ENCODE measurements at regions of chr9 and their contacts with region 1.

Region 1: GRCh38 chr9:128455849-128456612 is at the start of gene ODF2:
- DNase-seq: peak; percentile 99
- ATAC-seq: peak; percentile 95
- H3K4me3 Mint-ChIP-seq: peak within 1 kb of the TSS; percentile 81
- H3K27ac Mint-ChIP-seq: peak within 1 kb of the TSS; percentile 82
- H3K4me1 Mint-ChIP-seq: peaks cover 16% of the 10 kb centered on the region
- H3K27me3 Mint-ChIP-seq: no peaks in the 10 kb centered on the region
- total RNA-seq, gene ODF2: 73.5 to 86.4 TPM

Region 2: DNA sequence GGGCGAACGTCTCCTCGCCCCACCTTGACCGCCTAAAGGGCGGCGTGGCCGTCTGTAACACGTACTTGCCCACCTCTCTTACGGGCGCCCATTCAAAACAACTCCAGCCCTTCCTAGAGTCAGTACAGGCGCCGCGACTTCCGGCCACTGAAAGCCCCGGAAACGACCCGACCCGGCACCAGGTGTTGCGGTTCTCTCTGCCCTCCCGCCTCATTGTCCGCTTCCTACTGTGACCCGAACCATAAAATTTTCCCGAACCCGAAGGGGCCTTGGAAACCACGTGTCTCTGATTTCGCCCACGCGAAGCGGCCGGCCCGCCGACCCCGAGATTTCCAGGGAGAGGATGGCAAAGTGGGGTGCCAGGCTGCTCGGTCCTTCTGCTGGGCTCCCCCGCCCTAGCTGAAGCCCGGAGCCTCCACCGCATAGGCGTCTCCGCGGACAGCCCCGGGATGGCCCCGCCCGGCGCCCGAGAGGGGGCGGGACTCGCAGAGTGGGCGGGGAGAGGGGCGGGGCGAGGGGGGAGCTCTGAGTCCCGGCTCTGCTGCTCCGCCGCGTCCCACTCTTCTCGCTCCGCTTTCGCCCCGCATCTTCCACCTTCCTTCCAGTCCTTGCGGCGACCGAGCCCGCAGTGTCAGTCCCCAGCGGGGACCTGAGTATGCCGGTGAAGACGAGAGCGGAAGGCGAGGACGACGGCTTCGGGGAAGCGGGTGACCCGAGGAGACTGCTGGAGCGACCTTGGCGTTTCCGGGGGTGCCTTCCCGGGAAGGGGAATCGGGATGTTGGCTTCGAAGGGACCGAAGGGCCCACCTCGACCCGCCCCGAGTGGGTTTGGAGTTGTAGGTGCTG is 327.8 kb before region 1 on chr9:
- CTCF ChIA-PET with region 1: no interaction called
- POLR2A ChIA-PET with region 1: no interaction called
- intact Hi-C with region 1: loop called in 1 of 2 experiments (anchors 1 kb)
- DNase-seq: peak; percentile 90
- ATAC-seq: peak; percentile 84
- H3K4me3 Mint-ChIP-seq: peak overlapping the region; percentile 96
- H3K27ac Mint-ChIP-seq: peak overlapping the region; percentile 96
- H3K4me1 Mint-ChIP-seq: peaks cover 29% of the 10 kb centered on the region
- H3K27me3 Mint-ChIP-seq: peaks cover 2% of the 10 kb centered on the region

Region 3: DNA sequence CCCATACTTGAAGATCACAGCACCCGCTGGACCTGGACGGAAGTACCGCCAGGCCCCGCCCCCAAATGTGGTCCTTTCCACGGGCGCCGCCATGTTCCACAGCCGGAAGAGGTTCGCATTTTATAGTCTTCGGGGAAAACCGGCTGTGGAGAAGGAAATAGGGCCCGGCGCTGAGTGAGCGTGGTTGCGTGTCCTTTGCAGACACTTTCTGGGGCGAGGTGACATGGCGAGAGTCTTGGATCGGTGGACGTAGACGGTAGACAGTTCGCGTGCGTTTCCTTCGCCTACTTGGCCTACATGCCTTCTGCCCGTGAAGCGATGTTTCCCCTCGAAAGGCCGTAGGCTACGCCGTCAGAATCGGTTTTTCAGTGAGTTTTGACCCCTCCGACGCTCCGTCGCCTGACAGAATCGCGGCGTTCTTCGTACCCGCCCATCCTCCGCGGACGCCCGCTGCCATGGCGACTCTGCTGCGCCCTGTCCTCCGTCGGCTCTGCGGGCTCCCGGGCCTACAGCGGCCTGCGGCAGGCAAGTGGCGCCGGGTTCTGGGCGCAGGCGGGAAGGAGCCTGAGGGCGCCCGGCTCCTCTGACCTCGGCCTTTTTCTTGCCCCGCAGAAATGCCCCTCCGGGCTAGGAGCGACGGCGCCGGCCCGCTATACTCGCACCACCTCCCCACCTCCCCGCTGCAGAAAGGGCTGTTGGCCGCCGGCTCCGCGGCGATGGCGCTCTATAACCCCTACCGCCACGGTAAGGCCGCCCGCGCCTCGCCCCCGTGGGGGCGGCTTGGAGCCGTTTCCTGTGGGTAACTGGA is 133.4 kb before region 1 on chr9 and contains the starts of genes COQ4 and TRUB2:
- CTCF ChIA-PET with region 1: no interaction called
- POLR2A ChIA-PET with region 1: no interaction called
- intact Hi-C with region 1: loop called in 1 of 2 experiments (anchors 1 kb)
- DNase-seq: peak; percentile 96
- ATAC-seq: peak; percentile 90
- H3K4me3 Mint-ChIP-seq: peak within 1 kb of the TSS; percentile 87
- H3K27ac Mint-ChIP-seq: peak within 1 kb of the TSS; percentile 93
- H3K4me1 Mint-ChIP-seq: peaks cover 19% of the 10 kb centered on the region
- H3K27me3 Mint-ChIP-seq: no peaks in the 10 kb centered on the region
- total RNA-seq, gene COQ4: 32.1 to 38.8 TPM
- total RNA-seq, gene TRUB2: 29.5 to 37.5 TPM

Region 4: DNA sequence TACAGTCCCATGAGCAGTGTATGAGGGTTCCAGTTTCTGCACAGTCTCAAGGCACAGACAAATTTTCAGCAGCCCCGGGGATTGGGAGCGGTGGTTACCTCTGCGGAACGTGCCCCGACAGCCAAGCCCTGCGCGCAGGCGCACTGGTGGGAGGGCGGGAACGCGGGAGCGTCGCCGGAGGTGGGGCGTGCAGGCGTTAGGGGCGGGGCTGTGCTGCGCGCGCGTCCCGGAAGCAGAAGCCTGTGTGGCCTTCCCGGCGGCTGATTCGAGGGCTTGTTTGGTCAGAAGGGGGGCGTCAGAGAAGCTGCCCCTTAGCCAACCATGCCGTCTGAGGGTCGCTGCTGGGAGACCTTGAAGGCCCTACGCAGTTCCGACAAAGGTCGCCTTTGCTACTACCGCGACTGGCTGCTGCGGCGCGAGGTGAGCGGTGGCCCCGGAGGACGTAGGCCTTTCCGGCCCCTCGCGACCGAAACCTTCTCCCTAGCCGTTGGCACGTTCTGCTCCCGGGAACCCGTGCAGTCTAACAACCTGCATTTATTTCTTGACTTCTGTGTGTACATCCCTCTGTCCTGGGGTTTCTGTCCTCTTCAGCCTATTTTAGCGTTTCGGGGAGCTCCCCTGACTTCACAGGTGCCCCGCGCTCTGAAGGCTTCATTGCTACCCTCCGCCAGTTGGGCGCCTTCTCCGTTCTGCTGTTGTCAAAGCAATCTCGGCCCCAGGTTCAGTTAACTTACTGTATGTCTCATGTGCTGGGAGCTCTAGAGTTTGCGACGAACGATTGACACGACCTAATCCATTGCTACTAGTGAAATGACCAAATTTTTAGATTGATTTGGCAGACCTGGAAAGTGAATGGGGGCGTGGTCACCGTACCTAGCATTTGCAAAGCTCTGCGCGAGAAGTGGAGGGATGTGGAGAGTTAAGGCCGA is 48.7 kb after region 1 on chr9 and contains the start of gene GLE1:
- CTCF ChIA-PET with region 1: interaction called, 3 read pairs
- POLR2A ChIA-PET with region 1: no interaction called
- intact Hi-C with region 1: loop called (anchors 1 to 5 kb)
- DNase-seq: peak; percentile 98
- ATAC-seq: peak; percentile 99
- H3K4me3 Mint-ChIP-seq: peak within 1 kb of the TSS; percentile 95
- H3K27ac Mint-ChIP-seq: peak within 1 kb of the TSS; percentile 99
- H3K4me1 Mint-ChIP-seq: peaks cover 21% of the 10 kb centered on the region
- H3K27me3 Mint-ChIP-seq: no peaks in the 10 kb centered on the region
- total RNA-seq, gene GLE1: 52.5 to 54.4 TPM

Region 5: GRCh38 chr9:128771745-128772519 is 315.9 kb after region 1 on chr9 and contains the start of gene ZER1:
- CTCF ChIA-PET with region 1: no interaction called
- POLR2A ChIA-PET with region 1: no interaction called
- intact Hi-C with region 1: loop called in 1 of 2 experiments (anchors 1 kb)
- DNase-seq: peak; percentile 97
- ATAC-seq: peak; percentile 94
- H3K4me3 Mint-ChIP-seq: peak within 1 kb of the TSS; percentile 82
- H3K27ac Mint-ChIP-seq: peak within 1 kb of the TSS; percentile 86
- H3K4me1 Mint-ChIP-seq: peaks cover 18% of the 10 kb centered on the region
- H3K27me3 Mint-ChIP-seq: no peaks in the 10 kb centered on the region
- total RNA-seq, gene ZER1: 17.1 to 19.3 TPM

Region 6: GRCh38 chr9:128947422-128948301 is 491.6 kb after region 1 on chr9 and contains the starts of genes DOLK and NUP188:
- CTCF ChIA-PET with region 1: no interaction called
- POLR2A ChIA-PET with region 1: no interaction called
- intact Hi-C with region 1: loop called in 1 of 2 experiments (anchors 1 kb)
- DNase-seq: peak; percentile 99
- ATAC-seq: peak; percentile 80
- H3K4me3 Mint-ChIP-seq: peak within 1 kb of the TSS; percentile 89
- H3K27ac Mint-ChIP-seq: peak within 1 kb of the TSS; percentile 95
- H3K4me1 Mint-ChIP-seq: peaks cover 29% of the 10 kb centered on the region
- H3K27me3 Mint-ChIP-seq: no peaks in the 10 kb centered on the region
- total RNA-seq, gene DOLK: 4.8 to 5.0 TPM
- total RNA-seq, gene NUP188: 102 to 124 TPM